Activated CD4-positive, alpha-beta memory T cell treated with anti-CD3 and anti-CD28 coated beads for 36 hours (primary cell): ENCODE measurements at regions of chr5 and their contacts with region 1.

Region 1: GRCh38 chr5:39209924-39210323 is 9.4 kb downstream of the FYB1 start:
- DNase-seq: peak; percentile 90
- H3K4me3 Mint-ChIP-seq: peak overlapping the region; percentile 83
- H3K27ac Mint-ChIP-seq: peak overlapping the region; percentile 95
- H3K4me1 Mint-ChIP-seq: peaks cover 75% of the 10 kb centered on the region
- H3K27me3 Mint-ChIP-seq: no peaks in the 10 kb centered on the region

Region 2: GRCh38 chr5:39074016-39074886 is 135.7 kb before region 1 on chr5 and contains the start of gene RICTOR:
- CTCF ChIA-PET with region 1: no interaction called
- POLR2A ChIA-PET with region 1: no interaction called
- intact Hi-C with region 1: loop called (anchors 2 kb)
- DNase-seq: peak; percentile 95
- H3K4me3 Mint-ChIP-seq: peak within 1 kb of the TSS; percentile 97
- H3K27ac Mint-ChIP-seq: peak within 1 kb of the TSS; percentile 96
- H3K4me1 Mint-ChIP-seq: peaks cover 28% of the 10 kb centered on the region
- H3K27me3 Mint-ChIP-seq: peaks cover 18% of the 10 kb centered on the region
- total RNA-seq, gene RICTOR: 27.7 to 27.8 TPM

Region 3: DNA sequence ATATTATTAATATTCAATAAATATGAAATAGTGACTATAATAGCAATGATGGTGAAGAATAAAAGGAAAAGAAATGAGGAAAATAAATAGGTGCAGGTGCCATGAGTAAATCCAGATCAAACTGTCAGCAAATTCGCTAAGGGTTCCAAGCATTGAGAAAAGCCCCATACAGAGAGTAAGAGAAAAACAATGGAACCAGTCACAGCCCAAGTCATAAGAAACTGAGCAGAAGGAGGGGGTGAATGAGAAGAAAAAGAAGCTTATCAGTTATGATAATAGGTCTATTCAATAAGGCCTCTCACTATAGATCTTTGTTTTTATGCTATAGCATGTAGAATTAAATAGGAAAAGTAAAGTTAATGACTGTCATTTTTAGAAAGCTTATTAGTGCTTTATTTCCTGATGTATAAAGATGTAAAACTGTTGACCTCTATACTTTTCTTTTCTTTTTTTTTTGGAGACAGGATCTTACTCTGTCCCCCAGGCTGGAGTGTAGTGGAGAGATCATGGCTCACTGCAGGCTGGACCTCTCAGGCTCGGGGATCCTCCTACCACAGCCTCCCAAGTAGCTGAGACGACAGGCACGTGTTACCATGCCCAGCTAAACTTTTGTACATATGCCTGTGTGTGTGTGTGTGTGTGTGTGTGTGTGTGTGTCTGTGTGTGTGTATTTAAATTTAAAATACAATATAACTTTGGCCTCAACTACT is 62.9 kb before region 1 on chr5:
- CTCF ChIA-PET with region 1: no interaction called
- POLR2A ChIA-PET with region 1: no interaction called
- intact Hi-C with region 1: no loop called
- DNase-seq: no peak
- H3K4me3 Mint-ChIP-seq: no peak overlapping the region
- H3K27ac Mint-ChIP-seq: no peak overlapping the region
- H3K4me1 Mint-ChIP-seq: peaks cover 47% of the 10 kb centered on the region
- H3K27me3 Mint-ChIP-seq: no peaks in the 10 kb centered on the region

Region 4: DNA sequence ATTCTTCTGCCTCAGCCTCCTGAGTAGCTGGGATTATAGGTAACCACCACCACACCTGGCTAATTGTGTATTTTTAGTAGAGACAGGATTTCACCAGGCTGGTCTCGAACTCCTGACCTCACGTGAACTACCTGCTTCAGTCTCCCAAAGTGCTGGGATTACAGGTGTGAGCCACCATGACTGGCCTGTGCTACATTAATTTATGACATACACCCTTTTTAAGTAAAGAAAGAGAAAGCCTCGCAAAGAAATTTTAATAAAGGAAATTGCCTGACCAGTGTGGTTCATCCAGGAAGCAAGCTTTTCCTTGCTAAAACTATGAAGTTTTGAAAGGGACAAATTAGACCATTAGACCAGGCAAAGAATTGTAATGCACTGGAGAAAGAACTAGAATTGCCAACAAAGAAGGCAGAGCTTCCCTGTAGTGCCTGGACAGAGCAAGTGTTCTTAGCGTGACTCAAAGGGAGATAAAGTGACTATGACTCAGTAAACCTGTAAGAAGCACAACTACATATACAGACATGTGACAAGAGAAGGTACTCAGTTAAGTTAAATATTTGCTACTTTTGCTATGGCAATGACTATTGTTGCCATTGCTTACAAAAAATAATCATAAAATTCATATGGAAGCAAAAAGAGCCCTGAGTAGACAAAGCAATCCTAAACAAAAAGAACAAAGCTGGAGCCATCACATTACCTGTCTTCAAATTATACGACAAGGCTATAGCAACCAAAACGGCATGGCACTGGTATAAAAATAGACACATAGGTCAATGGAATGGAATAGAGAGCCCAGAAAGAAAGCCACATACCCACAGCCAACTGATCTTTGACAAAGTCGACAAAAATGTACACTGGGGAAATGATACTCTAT is 45.2 kb before region 1 on chr5:
- CTCF ChIA-PET with region 1: interaction called, 7 read pairs
- POLR2A ChIA-PET with region 1: interaction called, 5 read pairs
- intact Hi-C with region 1: loop called (anchors 1 kb)
- DNase-seq: peak; percentile 42
- H3K4me3 Mint-ChIP-seq: peak overlapping the region; percentile 75
- H3K27ac Mint-ChIP-seq: peak overlapping the region; percentile 96
- H3K4me1 Mint-ChIP-seq: peaks cover 80% of the 10 kb centered on the region
- H3K27me3 Mint-ChIP-seq: no peaks in the 10 kb centered on the region

Region 5: DNA sequence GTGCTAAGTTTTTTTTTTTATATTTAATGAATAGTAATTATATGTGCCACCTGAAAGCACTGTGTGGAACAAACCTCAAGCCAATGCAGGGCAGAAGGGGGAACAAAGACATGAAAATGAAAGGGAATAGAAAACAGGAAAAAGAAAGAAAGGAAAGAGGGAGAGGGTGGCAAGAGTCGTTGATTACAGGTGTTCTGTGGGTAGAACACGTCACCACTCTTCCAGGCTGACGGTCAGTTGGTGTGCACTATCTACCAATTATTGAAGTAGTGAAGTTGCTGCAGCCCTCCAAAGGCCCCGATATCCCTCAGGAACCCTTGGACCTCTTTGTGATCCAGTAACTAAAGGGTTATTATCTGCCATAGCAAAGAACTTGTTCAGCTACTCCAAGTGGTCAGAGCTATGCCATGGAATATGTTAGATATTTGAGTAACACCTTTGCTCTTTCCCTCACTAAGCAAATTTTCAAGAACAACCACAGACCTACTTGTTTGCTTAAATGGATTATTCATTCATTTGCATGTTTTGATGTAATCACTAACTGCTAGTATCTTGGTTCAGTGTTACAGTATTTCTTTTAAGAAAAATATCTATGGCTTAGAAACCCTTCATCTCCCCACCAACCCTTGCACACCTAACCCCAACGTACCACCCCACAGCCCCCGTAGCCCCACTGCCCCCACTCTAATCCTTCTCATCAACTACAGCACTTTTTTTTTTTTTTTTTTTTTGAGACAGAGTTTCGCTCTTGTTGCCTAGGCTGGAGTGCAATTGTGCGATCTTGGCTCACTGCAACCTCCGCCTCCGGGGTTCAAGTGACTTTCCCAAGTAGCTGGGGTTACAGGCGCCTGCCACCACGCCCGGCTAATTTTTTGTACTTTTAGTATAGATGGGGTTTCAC is 21.8 kb before region 1 on chr5:
- CTCF ChIA-PET with region 1: interaction called, 5 read pairs
- POLR2A ChIA-PET with region 1: interaction called, 16 read pairs
- intact Hi-C with region 1: no loop called
- DNase-seq: no peak
- H3K4me3 Mint-ChIP-seq: peak overlapping the region; percentile 69
- H3K27ac Mint-ChIP-seq: peak overlapping the region; percentile 92
- H3K4me1 Mint-ChIP-seq: peaks cover 79% of the 10 kb centered on the region
- H3K27me3 Mint-ChIP-seq: no peaks in the 10 kb centered on the region

Region 6: GRCh38 chr5:39231705-39232525 is 22.0 kb after region 1 on chr5:
- CTCF ChIA-PET with region 1: interaction called, 10 read pairs
- POLR2A ChIA-PET with region 1: interaction called, 6 read pairs
- intact Hi-C with region 1: loop called (anchors 1 kb)
- DNase-seq: peak; percentile 75
- H3K4me3 Mint-ChIP-seq: peak overlapping the region; percentile 70
- H3K27ac Mint-ChIP-seq: peak overlapping the region; percentile 97
- H3K4me1 Mint-ChIP-seq: peaks cover 14% of the 10 kb centered on the region
- H3K27me3 Mint-ChIP-seq: no peaks in the 10 kb centered on the region

Region 7: DNA sequence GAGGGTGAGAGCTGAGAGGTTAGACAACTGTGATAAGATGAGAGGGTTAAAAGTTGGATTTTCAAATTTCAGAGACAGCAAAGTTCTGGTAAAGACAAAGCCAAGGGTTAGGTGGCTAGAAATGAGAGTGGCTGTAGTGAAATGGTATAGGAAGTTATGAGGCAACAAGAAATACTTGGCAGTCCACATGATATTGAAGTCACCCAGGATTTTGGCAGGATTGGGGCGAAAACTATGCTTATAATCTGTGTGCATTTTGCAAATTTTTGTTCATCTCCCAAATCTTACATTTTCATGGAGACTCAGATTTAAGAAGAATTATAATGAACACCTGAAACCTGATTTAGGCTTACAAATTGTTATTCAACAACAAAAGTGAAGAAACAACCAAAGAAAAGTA is 118.8 kb after region 1 on chr5:
- CTCF ChIA-PET with region 1: no interaction called
- POLR2A ChIA-PET with region 1: no interaction called
- intact Hi-C with region 1: no loop called
- DNase-seq: no peak
- H3K4me3 Mint-ChIP-seq: no peak overlapping the region
- H3K27ac Mint-ChIP-seq: no peak overlapping the region
- H3K4me1 Mint-ChIP-seq: no peaks in the 10 kb centered on the region
- H3K27me3 Mint-ChIP-seq: peaks cover 1% of the 10 kb centered on the region

Region 8: DNA sequence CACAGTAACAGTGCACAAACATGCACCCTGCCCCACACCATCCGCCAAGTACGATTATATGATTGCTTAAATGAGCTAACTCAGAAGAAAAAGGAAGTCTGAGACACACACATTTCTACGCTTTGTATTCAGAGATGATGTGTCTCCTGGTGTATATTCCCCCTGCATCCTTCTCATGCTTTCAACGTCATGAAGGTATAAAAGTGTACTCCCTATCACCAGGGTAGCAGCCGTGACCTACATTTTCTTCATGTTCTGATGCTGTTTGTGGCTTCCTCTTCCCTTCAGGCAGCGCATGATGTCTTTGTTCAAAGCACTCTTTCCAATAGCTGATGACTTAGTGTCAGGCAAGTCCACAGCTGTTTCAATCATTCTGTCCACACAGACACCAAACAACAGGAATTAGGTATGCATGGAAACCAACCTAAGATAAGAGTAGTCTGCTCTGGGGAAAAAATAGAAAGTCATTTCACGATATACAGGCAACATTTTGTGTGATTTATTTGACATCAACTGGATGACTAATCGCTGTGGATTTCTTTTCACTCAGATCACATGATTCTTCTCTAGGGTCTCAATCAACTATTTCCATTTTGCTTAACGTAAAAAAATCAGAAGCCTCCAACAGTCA is 1200.4 kb after region 1 on chr5:
- CTCF ChIA-PET with region 1: no interaction called
- POLR2A ChIA-PET with region 1: no interaction called
- intact Hi-C with region 1: loop called (anchors 5 kb)
- DNase-seq: peak; percentile 82
- H3K4me3 Mint-ChIP-seq: peak overlapping the region; percentile 62
- H3K27ac Mint-ChIP-seq: peak overlapping the region; percentile 99
- H3K4me1 Mint-ChIP-seq: peaks cover 64% of the 10 kb centered on the region
- H3K27me3 Mint-ChIP-seq: no peaks in the 10 kb centered on the region